MCF 10A (cell line): ENCODE measurements at regions of chr15 and their contacts with region 1.

Region 1: GRCh38 chr15:89874926-89875564 is 18.7 kb downstream of the AP3S2 start:
- DNase-seq: peak; percentile 72
- H3K4me3 Mint-ChIP-seq: no peak overlapping the region
- H3K27ac Mint-ChIP-seq: peak overlapping the region; percentile 46
- H3K4me1 Mint-ChIP-seq: no peaks in the 10 kb centered on the region
- H3K27me3 Mint-ChIP-seq: no peaks in the 10 kb centered on the region
- CTCF ChIP-seq: peak; percentile 84

Region 2: DNA sequence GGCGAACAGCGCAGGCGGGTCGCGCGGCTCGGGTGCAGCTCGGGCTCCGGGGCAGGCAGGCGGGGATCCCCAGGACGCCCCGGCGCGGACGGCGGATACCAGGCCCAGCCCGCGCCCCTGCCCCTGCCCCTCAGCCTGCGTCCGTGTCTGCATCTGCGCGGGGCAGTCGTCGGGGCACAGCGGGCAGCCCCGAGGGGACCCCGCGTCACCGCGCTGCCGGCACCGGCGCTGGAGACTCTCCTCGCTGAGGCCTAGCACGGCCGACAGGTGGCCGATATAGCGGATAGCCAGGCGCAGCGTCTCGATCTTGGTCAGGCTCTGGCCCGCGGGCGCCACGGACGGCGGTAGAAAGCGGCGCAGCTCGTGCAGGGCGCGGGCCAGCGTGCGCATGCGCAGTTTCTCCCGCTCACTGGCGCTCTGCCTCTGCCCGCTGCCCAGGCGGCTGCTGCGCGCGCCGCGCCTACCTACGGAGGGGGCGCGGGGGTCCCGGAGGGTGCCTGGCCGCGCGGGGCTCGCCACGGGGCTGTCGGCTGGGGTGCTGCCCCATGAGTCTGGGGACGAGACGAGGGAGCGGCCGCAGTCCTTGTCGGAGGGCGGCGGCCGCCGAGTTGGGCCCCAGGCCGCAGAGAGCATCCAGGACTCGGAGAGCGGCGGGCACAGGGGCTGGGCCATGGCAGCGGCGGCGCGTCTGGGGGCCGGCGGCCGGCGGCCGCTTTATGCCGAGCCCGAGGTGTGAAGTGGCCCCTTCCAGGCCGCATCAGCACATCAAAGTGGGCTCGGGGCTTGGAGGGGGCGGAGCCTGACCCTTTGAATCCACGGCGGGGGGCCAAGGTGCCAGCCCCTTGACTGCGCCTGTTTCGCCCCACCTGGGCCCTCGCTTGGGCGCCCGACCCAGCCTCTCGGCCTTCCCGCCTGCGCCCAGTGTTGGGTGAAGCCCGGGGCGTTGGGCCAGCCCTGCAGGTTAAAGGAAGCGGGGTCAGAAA is 124.2 kb before region 1 on chr15 and contains the start of gene MESP1:
- CTCF ChIA-PET with region 1: interaction called, 38 read pairs
- POLR2A ChIA-PET with region 1: interaction called, 10 read pairs
- intact Hi-C with region 1: no loop called
- DNase-seq: peak; percentile 86
- H3K4me3 Mint-ChIP-seq: peak within 1 kb of the TSS; percentile 49
- H3K27ac Mint-ChIP-seq: no peak within 1 kb of the TSS
- H3K4me1 Mint-ChIP-seq: peaks cover 6% of the 10 kb centered on the region
- H3K27me3 Mint-ChIP-seq: no peaks in the 10 kb centered on the region
- CTCF ChIP-seq: peak; percentile 76
- total RNA-seq, gene MESP1: 0.58 and 1.6 TPM in 2 replicates

Region 3: GRCh38 chr15:89776274-89777072 is 98.6 kb before region 1 on chr15 and contains the start of gene MESP2:
- CTCF ChIA-PET with region 1: interaction called, 28 read pairs
- POLR2A ChIA-PET with region 1: interaction called, 3 read pairs
- intact Hi-C with region 1: no loop called
- DNase-seq: peak; percentile 62
- H3K4me3 Mint-ChIP-seq: no peak within 1 kb of the TSS
- H3K27ac Mint-ChIP-seq: no peak within 1 kb of the TSS
- H3K4me1 Mint-ChIP-seq: peaks cover 14% of the 10 kb centered on the region
- H3K27me3 Mint-ChIP-seq: no peaks in the 10 kb centered on the region
- CTCF ChIP-seq: no peak
- total RNA-seq, gene MESP2: not detected in 2 replicates

Region 4: GRCh38 chr15:89820666-89821611 is 54.1 kb before region 1 on chr15:
- CTCF ChIA-PET with region 1: interaction called, 10 read pairs
- POLR2A ChIA-PET with region 1: interaction called, 4 read pairs
- intact Hi-C with region 1: no loop called
- DNase-seq: peak; percentile 88
- H3K4me3 Mint-ChIP-seq: peak overlapping the region; percentile 33
- H3K27ac Mint-ChIP-seq: peak overlapping the region; percentile 81
- H3K4me1 Mint-ChIP-seq: peaks cover 43% of the 10 kb centered on the region
- H3K27me3 Mint-ChIP-seq: no peaks in the 10 kb centered on the region
- CTCF ChIP-seq: no peak

Region 5: GRCh38 chr15:89845305-89845893 is 29.6 kb before region 1 on chr15:
- CTCF ChIA-PET with region 1: interaction called, 14 read pairs
- POLR2A ChIA-PET with region 1: interaction called, 3 read pairs
- intact Hi-C with region 1: no loop called
- DNase-seq: peak; percentile 88
- H3K4me3 Mint-ChIP-seq: no peak overlapping the region
- H3K27ac Mint-ChIP-seq: peak overlapping the region; percentile 80
- H3K4me1 Mint-ChIP-seq: peaks cover 48% of the 10 kb centered on the region
- H3K27me3 Mint-ChIP-seq: no peaks in the 10 kb centered on the region
- CTCF ChIP-seq: no peak

Region 6: GRCh38 chr15:89893696-89894455 is 18.8 kb after region 1 on chr15 and contains the start of gene AP3S2:
- CTCF ChIA-PET with region 1: interaction called, 88 read pairs
- POLR2A ChIA-PET with region 1: interaction called, 6 read pairs
- intact Hi-C with region 1: no loop called
- DNase-seq: peak; percentile 94
- H3K4me3 Mint-ChIP-seq: peak within 1 kb of the TSS; percentile 98
- H3K27ac Mint-ChIP-seq: peak within 1 kb of the TSS; percentile 97
- H3K4me1 Mint-ChIP-seq: no peaks in the 10 kb centered on the region
- H3K27me3 Mint-ChIP-seq: no peaks in the 10 kb centered on the region
- CTCF ChIP-seq: no peak
- total RNA-seq, gene AP3S2: 38.4 and 39.5 TPM in 2 replicates

Region 7: GRCh38 chr15:90002428-90002844 is 127.4 kb after region 1 on chr15:
- CTCF ChIA-PET with region 1: no interaction called
- POLR2A ChIA-PET with region 1: no interaction called
- intact Hi-C with region 1: no loop called
- DNase-seq: peak; percentile 59
- H3K4me3 Mint-ChIP-seq: peak overlapping the region; percentile 92
- H3K27ac Mint-ChIP-seq: peak overlapping the region; percentile 93
- H3K4me1 Mint-ChIP-seq: peaks cover 51% of the 10 kb centered on the region
- H3K27me3 Mint-ChIP-seq: no peaks in the 10 kb centered on the region
- CTCF ChIP-seq: no peak